ENCODE measurements at regions of chr1 and their contacts with region 1.

Region 1: GRCh38 chr1:7207875-7208646 is 422.8 kb downstream of the CAMTA1 start:
- DNase-seq: peak in 4 of 5 donors; percentile 31 to 63 (median 49)
- ATAC-seq: peak; percentile 61 to 89 (median 83)
- H3K4me3 ChIP-seq: no peak overlapping the region
- H3K27ac ChIP-seq: no peak overlapping the region
- H3K4me1 ChIP-seq: no peaks in the 10 kb centered on the region
- H3K27me3 ChIP-seq: peaks cover 0 to 20% (median 0%) of the 10 kb centered on the region in 9 donors
- CTCF ChIP-seq: peak; percentile 43 to 75 (median 64)
- POLR2A ChIP-seq: no peak

Region 2: GRCh38 chr1:6784560-6785317 is 423.3 kb before region 1 on chr1:
- intact Hi-C with region 1: loop called in 1 of 10 experiments (anchors 10 kb)
- DNase-seq: peak; percentile 99 to 100 (median 100)
- ATAC-seq: peak; percentile 91 to 97 (median 96)
- H3K4me3 ChIP-seq: peak overlapping the region; percentile 29 to 96 (median 76)
- H3K27ac ChIP-seq: peak overlapping the region; percentile 91 to 100 (median 99)
- H3K4me1 ChIP-seq: peaks cover 3 to 50% (median 34%) of the 10 kb centered on the region in 12 donors
- H3K27me3 ChIP-seq: no peaks in the 10 kb centered on the region
- CTCF ChIP-seq: no peak
- POLR2A ChIP-seq: peak; percentile 22 to 66

Region 3: GRCh38 chr1:6794164-6794563 is 413.9 kb before region 1 on chr1:
- intact Hi-C with region 1: loop called in 3 of 10 experiments (anchors 5 to 10 kb)
- DNase-seq: no peak
- ATAC-seq: no peak
- H3K4me3 ChIP-seq: no peak overlapping the region
- H3K27ac ChIP-seq: no peak overlapping the region
- H3K4me1 ChIP-seq: peaks cover 4 to 67% (median 37%) of the 10 kb centered on the region in 12 donors
- H3K27me3 ChIP-seq: no peaks in the 10 kb centered on the region
- CTCF ChIP-seq: peak in 11 of 12 donors; percentile 14 to 61 (median 52)
- POLR2A ChIP-seq: no peak

Region 4: DNA sequence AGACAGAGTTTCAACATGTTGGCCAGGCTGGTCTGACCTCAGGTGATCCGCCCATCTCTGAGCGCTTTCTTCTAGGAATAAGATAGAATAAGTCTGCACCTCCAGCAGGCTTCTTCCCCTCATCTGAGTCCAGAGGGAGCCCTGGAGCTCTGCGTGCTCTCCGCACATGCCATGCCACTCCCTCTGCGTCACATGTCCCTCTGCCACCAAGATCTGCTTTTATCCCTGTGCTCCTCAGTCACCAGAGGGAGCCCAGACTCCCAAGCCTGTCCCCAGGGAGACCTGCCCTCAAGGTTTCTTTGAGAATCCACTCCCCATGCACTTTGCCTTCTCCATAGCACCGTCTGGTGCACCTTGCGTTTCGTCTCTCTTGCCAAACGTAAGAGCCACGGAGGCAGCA is 209.8 kb before region 1 on chr1:
- intact Hi-C with region 1: loop called in 2 of 10 experiments (anchors 2 to 5 kb)
- DNase-seq: peak in 3 of 5 donors; percentile 27 to 59 (median 47)
- ATAC-seq: peak; percentile 71 to 96 (median 93)
- H3K4me3 ChIP-seq: no peak overlapping the region
- H3K27ac ChIP-seq: no peak overlapping the region
- H3K4me1 ChIP-seq: no peaks in the 10 kb centered on the region
- H3K27me3 ChIP-seq: no peaks in the 10 kb centered on the region
- CTCF ChIP-seq: peak in 10 of 12 donors; percentile 22 to 53 (median 37)
- POLR2A ChIP-seq: no peak

Region 5: DNA sequence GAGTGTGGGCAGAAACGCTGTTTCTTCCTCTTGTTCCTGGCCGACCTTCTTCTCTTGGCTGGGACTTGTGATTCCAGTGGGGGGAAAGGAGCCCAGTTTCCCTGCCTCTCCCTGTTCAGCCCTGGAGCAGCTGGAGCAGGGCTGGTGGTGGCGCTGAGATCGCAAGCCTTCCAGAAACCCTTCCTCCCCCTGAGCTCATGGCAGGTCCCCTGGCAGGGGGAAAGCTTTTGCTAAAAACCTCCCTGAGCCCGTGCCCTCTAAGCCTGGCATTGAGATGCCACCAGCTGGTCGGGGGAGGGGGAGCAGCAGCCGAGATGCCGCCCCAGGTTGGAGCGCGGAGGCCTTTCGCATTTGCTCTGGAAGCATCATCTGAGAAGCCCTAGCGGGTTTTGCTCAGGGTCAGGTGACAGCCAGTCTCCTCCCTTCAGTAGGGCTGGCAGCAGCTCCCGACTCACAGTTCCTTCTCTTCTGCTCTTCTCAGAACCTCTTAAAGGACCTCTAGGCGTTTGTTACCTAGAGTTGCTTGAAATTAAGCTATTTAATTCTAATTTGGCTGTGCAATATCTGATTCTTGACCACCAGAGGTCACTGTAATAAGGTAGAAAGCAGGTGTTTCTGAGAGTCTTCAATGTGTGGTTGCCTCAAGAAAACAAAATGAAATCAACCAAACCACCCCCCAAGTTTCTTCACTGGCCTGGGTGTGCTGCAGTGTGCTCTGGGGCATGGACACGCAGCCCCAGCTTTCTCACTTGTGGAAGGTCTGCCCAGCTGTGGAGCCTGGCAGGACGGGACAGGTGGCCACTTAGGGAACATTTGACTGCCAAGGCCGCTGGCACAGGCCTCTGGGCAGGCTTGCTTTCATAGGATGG is 165.5 kb before region 1 on chr1:
- intact Hi-C with region 1: loop called in 6 of 10 experiments (anchors 5 to 10 kb)
- DNase-seq: no peak
- ATAC-seq: no peak
- H3K4me3 ChIP-seq: no peak overlapping the region
- H3K27ac ChIP-seq: no peak overlapping the region
- H3K4me1 ChIP-seq: no peaks in the 10 kb centered on the region
- H3K27me3 ChIP-seq: peaks cover 0 to 7% (median 0%) of the 10 kb centered on the region in 9 donors
- CTCF ChIP-seq: peak in 11 of 12 donors; percentile 22 to 54 (median 45)
- POLR2A ChIP-seq: no peak

Region 6: GRCh38 chr1:7281821-7282220 is 73.8 kb after region 1 on chr1:
- intact Hi-C with region 1: no loop called
- DNase-seq: no peak
- ATAC-seq: no peak
- H3K4me3 ChIP-seq: no peak overlapping the region
- H3K27ac ChIP-seq: no peak overlapping the region
- H3K4me1 ChIP-seq: no peaks in the 10 kb centered on the region
- H3K27me3 ChIP-seq: no peaks in the 10 kb centered on the region
- CTCF ChIP-seq: no peak
- POLR2A ChIP-seq: no peak